ENCODE measurements at regions of chr14 and their contacts with region 1.

Region 1: DNA sequence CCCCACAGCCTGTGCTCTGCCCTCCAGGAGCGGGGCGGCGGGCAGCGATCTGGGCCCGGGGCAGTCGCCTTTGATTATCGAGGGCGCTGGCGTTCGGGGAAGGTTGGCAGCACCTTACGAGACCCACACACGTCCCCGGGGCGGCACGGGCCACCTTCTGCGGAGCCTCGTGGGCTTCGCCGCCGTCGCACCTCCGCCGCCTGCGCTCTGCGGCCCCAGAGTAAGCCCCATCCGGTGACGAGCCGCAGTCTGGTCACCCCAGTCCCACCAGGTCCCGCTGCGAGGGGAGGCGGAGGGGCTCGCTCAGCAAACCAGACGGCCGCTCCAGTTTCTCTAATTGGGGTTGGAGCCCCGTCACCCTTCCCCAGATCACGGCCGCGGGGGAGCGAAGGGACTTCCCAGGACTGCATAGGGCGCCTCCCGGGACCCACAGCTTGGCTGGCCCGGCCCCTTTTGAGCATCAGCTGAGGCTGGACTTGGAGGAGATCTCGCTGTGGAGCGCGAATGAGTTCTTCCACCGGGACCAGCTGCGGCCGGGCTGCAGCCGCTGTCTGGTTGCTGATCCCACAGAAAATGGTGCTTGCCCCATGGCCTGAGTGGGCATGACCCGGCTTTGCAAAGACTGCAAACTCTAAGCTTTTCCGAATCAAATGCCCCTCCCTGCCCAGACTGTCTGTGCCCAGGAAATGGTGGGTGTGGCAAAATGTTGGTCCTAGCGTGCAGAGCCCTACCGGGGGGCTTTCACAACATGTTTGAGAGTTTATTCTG is 560 bp downstream of the LGALS3 start:
- DNase-seq: peak; percentile 95
- H3K4me3 ChIP-seq: peak overlapping the region; percentile 82 to 96 (median 88)
- H3K27ac ChIP-seq: peak overlapping the region; percentile 94 to 98 (median 98)
- H3K4me1 ChIP-seq: peaks cover 42 to 86% (median 71%) of the 10 kb centered on the region in 4 donors
- H3K27me3 ChIP-seq: no peaks in the 10 kb centered on the region
- CTCF ChIP-seq: no peak
- EP300 ChIP-seq: no peak
- POLR2A ChIP-seq: no peak

Region 2: GRCh38 chr14:55051426-55052268 is 78.0 kb before region 1 on chr14 and contains the start of gene MAPK1IP1L:
- intact Hi-C with region 1: no loop called
- DNase-seq: peak; percentile 96
- H3K4me3 ChIP-seq: peak within 1 kb of the TSS; percentile 94 to 98 (median 97)
- H3K27ac ChIP-seq: peak within 1 kb of the TSS; percentile 100
- H3K4me1 ChIP-seq: peaks cover 32 to 50% (median 46%) of the 10 kb centered on the region in 4 donors
- H3K27me3 ChIP-seq: no peaks in the 10 kb centered on the region
- CTCF ChIP-seq: peak; percentile 99 to 100 (median 100)
- EP300 ChIP-seq: peak; percentile 64
- POLR2A ChIP-seq: peak; percentile 98
- total RNA-seq, gene MAPK1IP1L: 36.5 to 95.4 (median 61.0) TPM

Region 3: GRCh38 chr14:55097881-55098560 is 31.6 kb before region 1 on chr14:
- intact Hi-C with region 1: loop called (anchors 5 kb)
- DNase-seq: no peak
- H3K4me3 ChIP-seq: no peak overlapping the region
- H3K27ac ChIP-seq: peak overlapping the region; percentile 22 to 93 (median 71)
- H3K4me1 ChIP-seq: peaks cover 22 to 56% (median 33%) of the 10 kb centered on the region in 4 donors
- H3K27me3 ChIP-seq: no peaks in the 10 kb centered on the region
- CTCF ChIP-seq: no peak
- EP300 ChIP-seq: no peak
- POLR2A ChIP-seq: no peak

Region 4: GRCh38 chr14:56422703-56423213 is 1293.1 kb after region 1 on chr14:
- intact Hi-C with region 1: no loop called
- DNase-seq: no peak
- H3K4me3 ChIP-seq: no peak overlapping the region
- H3K27ac ChIP-seq: no peak overlapping the region
- H3K4me1 ChIP-seq: peaks cover 0 to 12% (median 11%) of the 10 kb centered on the region in 4 donors
- H3K27me3 ChIP-seq: no peaks in the 10 kb centered on the region
- CTCF ChIP-seq: peak; percentile 66 to 75 (median 67)
- EP300 ChIP-seq: no peak
- POLR2A ChIP-seq: no peak

Measured in esophagus muscularis mucosa (tissue), 4 donors.